Activated CD4-positive, alpha-beta memory T cell treated with anti-CD3 and anti-CD28 coated beads, Interleukin-2, amount 10 ng/mL, durations not matched to agents 7 days and 5 days (primary cell): ENCODE measurements at regions of chr16 and their contacts with region 1.

Region 1: DNA sequence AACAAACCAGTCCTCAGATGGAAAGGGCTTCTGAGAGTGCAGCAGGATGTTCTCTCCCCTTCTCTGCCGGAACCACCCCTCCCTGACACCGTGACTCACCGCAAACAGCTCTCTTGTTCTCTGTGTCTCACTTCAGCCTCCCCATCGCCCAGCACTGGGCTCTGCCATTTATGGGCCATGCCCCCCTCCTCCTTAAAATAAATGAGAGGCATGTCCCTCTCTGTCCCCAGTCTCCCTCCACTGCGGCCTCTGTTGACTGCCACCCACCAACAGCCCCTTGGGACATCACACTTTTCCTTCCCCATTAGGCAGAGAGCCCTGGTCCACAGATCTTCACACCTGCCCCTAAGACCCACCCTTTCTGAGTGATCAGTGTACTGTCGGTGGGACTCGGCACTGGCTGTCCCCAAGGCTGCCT is 6.3 kb downstream of the CCDC102A start:
- DNase-seq: peak; percentile 85
- H3K4me3 Mint-ChIP-seq: peak overlapping the region; percentile 60
- H3K27ac Mint-ChIP-seq: peak overlapping the region; percentile 99
- H3K4me1 Mint-ChIP-seq: peaks cover 63% of the 10 kb centered on the region
- H3K27me3 Mint-ChIP-seq: no peaks in the 10 kb centered on the region

Region 2: GRCh38 chr16:57540906-57541753 is 11.0 kb after region 1 on chr16:
- CTCF ChIA-PET with region 1: no interaction called
- POLR2A ChIA-PET with region 1: interaction called, 18 read pairs
- DNase-seq: peak; percentile 15
- H3K4me3 Mint-ChIP-seq: no peak overlapping the region
- H3K27ac Mint-ChIP-seq: peak overlapping the region; percentile 75
- H3K4me1 Mint-ChIP-seq: peaks cover 74% of the 10 kb centered on the region
- H3K27me3 Mint-ChIP-seq: no peaks in the 10 kb centered on the region